Endothelial cell of umbilical vein (primary cell): ENCODE measurements at regions of chr14 and their contacts with region 1.

Region 1: GRCh38 chr14:71776471-71777360 is 155.5 kb upstream of the RGS6 start:
- DNase-seq: peak; percentile 64
- H3K4me3 ChIP-seq: no peak overlapping the region
- H3K27ac ChIP-seq: no peak overlapping the region
- H3K4me1 ChIP-seq: peaks cover 20% of the 10 kb centered on the region
- H3K27me3 ChIP-seq: peaks cover 0 to 2% of the 10 kb centered on the region in 2 experiments
- CTCF ChIP-seq: no peak
- POLR2A ChIP-seq: no peak

Region 2: GRCh38 chr14:71703477-71703876 is 73.2 kb before region 1 on chr14:
- CTCF ChIA-PET with region 1: no interaction called
- POLR2A ChIA-PET with region 1: no interaction called
- dilution Hi-C with region 1: no loop called
- intact Hi-C with region 1: no loop called
- DNase-seq: no peak
- H3K4me3 ChIP-seq: no peak overlapping the region
- H3K27ac ChIP-seq: no peak overlapping the region
- H3K4me1 ChIP-seq: peaks cover 6% of the 10 kb centered on the region
- H3K27me3 ChIP-seq: no peaks in the 10 kb centered on the region
- CTCF ChIP-seq: no peak
- POLR2A ChIP-seq: no peak

Region 3: DNA sequence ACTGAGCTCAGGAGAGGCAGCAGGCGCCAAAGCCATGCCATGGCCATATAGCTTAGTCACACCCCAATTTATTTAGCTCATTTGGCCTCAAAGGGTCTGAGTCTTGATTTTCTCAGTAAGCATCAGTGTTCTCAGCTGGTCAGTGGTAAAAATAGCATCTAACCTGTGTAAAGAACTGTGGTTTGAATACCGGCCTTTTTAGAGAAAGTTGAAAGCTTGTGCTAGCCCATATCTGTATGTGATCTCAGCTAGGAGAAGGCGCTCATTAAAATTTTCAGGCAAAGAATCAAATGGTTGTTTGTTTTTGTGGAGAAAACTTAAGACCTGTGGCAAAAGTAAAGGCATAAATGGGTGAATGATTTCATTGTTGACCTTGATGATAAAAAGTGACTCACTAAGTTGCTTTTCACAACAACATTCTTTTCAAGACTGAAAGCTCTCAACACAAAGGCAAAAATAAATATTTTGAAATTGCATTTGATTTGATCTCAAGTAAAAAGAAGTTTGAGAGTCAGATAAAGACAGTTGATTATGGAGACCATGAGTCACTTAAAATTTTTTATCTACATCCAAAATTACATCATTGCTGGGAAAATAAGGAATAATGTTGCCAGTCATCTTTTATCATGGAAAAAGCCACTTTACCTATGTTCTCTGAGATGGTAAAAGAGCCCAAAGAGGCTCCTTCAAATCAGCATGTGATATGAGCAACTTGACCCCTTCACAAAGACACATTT is 27.0 kb after region 1 on chr14:
- CTCF ChIA-PET with region 1: no interaction called
- POLR2A ChIA-PET with region 1: no interaction called
- dilution Hi-C with region 1: no loop called
- intact Hi-C with region 1: loop called (anchors 1 kb)
- DNase-seq: peak; percentile 79
- H3K4me3 ChIP-seq: no peak overlapping the region
- H3K27ac ChIP-seq: peak overlapping the region; percentile 75
- H3K4me1 ChIP-seq: peaks cover 13% of the 10 kb centered on the region
- H3K27me3 ChIP-seq: no peaks in the 10 kb centered on the region
- CTCF ChIP-seq: no peak
- POLR2A ChIP-seq: no peak